Heart left ventricle (tissue), 16 donors: ENCODE measurements at regions of chr18 and their contacts with region 1.

Region 1: DNA sequence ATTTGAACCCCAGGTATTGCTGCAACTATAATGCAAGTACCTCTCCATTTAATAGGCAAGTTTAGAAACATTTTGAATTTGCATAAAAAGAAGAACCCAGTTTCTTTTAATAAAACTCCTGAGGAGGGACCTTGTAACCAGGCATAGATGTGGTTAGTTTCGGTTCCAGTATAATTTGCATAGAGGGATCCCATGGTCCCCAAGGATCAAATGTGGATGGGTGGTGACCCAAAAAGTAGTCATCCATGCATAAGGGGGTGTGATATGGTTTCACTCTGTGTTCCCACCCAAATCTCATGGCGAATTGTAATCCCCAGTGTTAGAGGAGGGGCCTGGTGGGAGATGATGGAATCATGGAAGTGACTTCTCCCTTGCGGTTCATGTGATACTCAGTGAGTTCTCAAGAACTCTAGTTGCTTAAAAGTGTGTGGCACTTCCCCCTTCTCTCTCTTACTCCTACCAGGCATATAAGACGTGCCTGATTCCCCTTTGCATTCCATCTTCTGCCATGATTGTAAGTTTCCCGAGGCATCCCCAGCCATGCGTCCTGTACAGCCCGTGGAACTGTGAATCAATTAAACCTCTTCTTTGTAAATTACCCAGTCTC is 40.2 kb upstream of the SKA1 start:
- DNase-seq: no peak
- ATAC-seq: no peak
- H3K4me3 ChIP-seq: no peak overlapping the region
- H3K27ac ChIP-seq: no peak overlapping the region
- H3K4me1 ChIP-seq: no peaks in the 10 kb centered on the region
- H3K27me3 ChIP-seq: no peaks in the 10 kb centered on the region
- CTCF ChIP-seq: no peak
- POLR2A ChIP-seq: no peak

Region 2: DNA sequence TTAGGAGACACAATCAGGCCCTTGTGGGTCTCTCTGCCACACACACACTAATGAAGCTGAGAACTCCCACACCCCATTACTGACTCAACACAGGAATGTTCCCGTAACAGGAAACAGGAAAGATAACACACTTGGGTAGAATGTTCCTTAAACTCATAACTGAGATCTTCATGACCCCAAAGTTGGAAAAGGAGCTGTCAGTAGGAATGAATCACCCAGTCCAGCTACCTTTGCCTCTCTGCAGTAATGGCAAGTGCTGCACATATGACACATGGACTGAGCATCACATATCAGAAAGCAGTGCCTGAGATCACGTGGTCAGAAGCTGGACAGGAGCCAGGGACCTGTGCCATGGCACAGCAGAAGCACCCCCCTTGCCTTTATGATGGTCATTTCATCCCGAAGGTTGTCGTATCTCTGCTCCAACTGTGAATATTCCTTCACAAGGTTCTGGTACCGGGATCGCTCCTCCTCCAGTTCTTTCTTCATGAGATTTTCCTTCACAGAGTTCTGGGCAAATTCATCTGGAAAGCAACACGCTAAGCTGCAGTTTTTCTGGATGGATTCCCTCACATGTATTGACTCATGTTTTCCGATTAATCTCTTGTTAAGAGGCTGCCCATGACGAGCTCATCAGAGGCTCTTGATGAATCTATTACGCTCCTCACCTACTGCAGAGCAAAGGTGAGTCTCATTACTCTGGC is 455.9 kb before region 1 on chr18:
- intact Hi-C with region 1: loop called in 1 of 10 experiments (anchors 10 kb)
- DNase-seq: no peak
- ATAC-seq: no peak
- H3K4me3 ChIP-seq: no peak overlapping the region
- H3K27ac ChIP-seq: no peak overlapping the region
- H3K4me1 ChIP-seq: no peaks in the 10 kb centered on the region
- H3K27me3 ChIP-seq: peaks cover 0 to 8% (median 0%) of the 10 kb centered on the region in 9 donors
- CTCF ChIP-seq: no peak
- POLR2A ChIP-seq: no peak